ENCODE measurements at regions of chr7 and their contacts with region 1.

Region 1: GRCh38 chr7:116354546-116355408 is 144.4 kb downstream of the TES start:
- DNase-seq: peak; percentile 98
- ATAC-seq: peak; percentile 92
- H3K4me3 ChIP-seq: peak overlapping the region; percentile 0; the same call in 1 of the 2 replicates
- H3K27ac ChIP-seq: peak overlapping the region; percentile 69
- H3K4me1 ChIP-seq: peaks cover 24% of the 10 kb centered on the region
- H3K27me3 ChIP-seq: no peaks in the 10 kb centered on the region
- CTCF ChIP-seq: no peak
- POLR2A ChIP-seq: peak; percentile 41; the same call in 1 of the 2 replicates
- RAD21 ChIP-seq: peak; percentile 34

Region 2: GRCh38 chr7:116271963-116272839 is 82.6 kb before region 1 on chr7:
- CTCF ChIA-PET with region 1: interaction called, 3 read pairs
- POLR2A ChIA-PET with region 1: no interaction called
- dilution Hi-C with region 1: no loop called
- in situ Hi-C with region 1: no loop called
- intact Hi-C with region 1: loop called (anchors 2 kb)
- DNase-seq: peak; percentile 98
- ATAC-seq: peak; percentile 89
- H3K4me3 ChIP-seq: peak overlapping the region; percentile 36; the same call in 1 of the 2 replicates
- H3K27ac ChIP-seq: peak overlapping the region; percentile 90
- H3K4me1 ChIP-seq: peaks cover 16% of the 10 kb centered on the region
- H3K27me3 ChIP-seq: no peaks in the 10 kb centered on the region
- CTCF ChIP-seq: no peak
- POLR2A ChIP-seq: no peak
- RAD21 ChIP-seq: peak; percentile 11

Region 3: DNA sequence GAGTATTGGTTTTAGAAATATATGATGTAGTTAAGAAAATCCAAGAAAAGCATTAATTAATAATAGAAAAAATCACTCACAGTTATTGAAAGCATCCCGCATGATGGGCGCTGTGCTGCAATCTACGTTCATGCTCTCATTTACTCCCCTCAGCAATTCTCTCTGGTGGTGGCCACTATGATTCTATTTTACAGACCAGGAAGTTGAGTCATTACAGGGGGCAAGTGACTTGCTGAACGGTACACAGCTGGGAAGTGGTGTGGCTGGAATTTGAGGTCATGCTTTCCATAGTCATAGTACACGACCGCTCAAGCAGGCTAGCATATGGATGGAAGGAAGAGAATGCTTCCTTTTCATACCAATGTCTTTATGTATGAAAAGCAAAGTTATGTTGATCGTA is 27.0 kb before region 1 on chr7:
- CTCF ChIA-PET with region 1: interaction called, 3 read pairs
- POLR2A ChIA-PET with region 1: no interaction called
- dilution Hi-C with region 1: no loop called
- in situ Hi-C with region 1: no loop called
- intact Hi-C with region 1: loop called (anchors 1 kb)
- DNase-seq: peak; percentile 99
- ATAC-seq: peak; percentile 82
- H3K4me3 ChIP-seq: no peak overlapping the region; the same call in 1 of the 2 replicates
- H3K27ac ChIP-seq: peak overlapping the region; percentile 55; the same call in 1 of the 2 replicates
- H3K4me1 ChIP-seq: peaks cover 7% of the 10 kb centered on the region; the same call in 1 of the 2 replicates
- H3K27me3 ChIP-seq: no peaks in the 10 kb centered on the region
- CTCF ChIP-seq: no peak
- POLR2A ChIP-seq: peak; percentile 85
- RAD21 ChIP-seq: peak; percentile 35

Region 4: GRCh38 chr7:116443101-116443523 is 88.3 kb after region 1 on chr7:
- CTCF ChIA-PET with region 1: no interaction called
- POLR2A ChIA-PET with region 1: interaction called, 5 read pairs
- dilution Hi-C with region 1: no loop called
- in situ Hi-C with region 1: no loop called
- intact Hi-C with region 1: loop called (anchors 1 kb)
- DNase-seq: peak; percentile 97
- ATAC-seq: peak; percentile 76
- H3K4me3 ChIP-seq: no peak overlapping the region
- H3K27ac ChIP-seq: 0 out of 2 replicates have a peak overlapping the region, but pooled peaks have one; percentile 87
- H3K4me1 ChIP-seq: peaks cover 14% of the 10 kb centered on the region
- H3K27me3 ChIP-seq: no peaks in the 10 kb centered on the region
- CTCF ChIP-seq: no peak
- POLR2A ChIP-seq: no peak
- RAD21 ChIP-seq: no peak

Region 5: GRCh38 chr7:117023325-117023854 is 668.6 kb after region 1 on chr7:
- CTCF ChIA-PET with region 1: no interaction called
- POLR2A ChIA-PET with region 1: no interaction called
- dilution Hi-C with region 1: no loop called
- in situ Hi-C with region 1: no loop called
- intact Hi-C with region 1: no loop called
- DNase-seq: no peak
- ATAC-seq: no peak
- H3K4me3 ChIP-seq: no peak overlapping the region
- H3K27ac ChIP-seq: no peak overlapping the region
- H3K4me1 ChIP-seq: peaks cover 5% of the 10 kb centered on the region
- H3K27me3 ChIP-seq: no peaks in the 10 kb centered on the region
- CTCF ChIP-seq: no peak
- POLR2A ChIP-seq: no peak
- RAD21 ChIP-seq: no peak